ENCODE measurements at regions of chr10 and their contacts with region 1.

Region 1: GRCh38 chr10:100046021-100046486 is 35.6 kb downstream of the CPN1 start:
- DNase-seq: peak; percentile 78 to 95
- H3K4me3 ChIP-seq: no peak overlapping the region
- H3K4me1 ChIP-seq: no peaks in the 10 kb centered on the region
- H3K27me3 ChIP-seq: no peaks in the 10 kb centered on the region

Region 2: DNA sequence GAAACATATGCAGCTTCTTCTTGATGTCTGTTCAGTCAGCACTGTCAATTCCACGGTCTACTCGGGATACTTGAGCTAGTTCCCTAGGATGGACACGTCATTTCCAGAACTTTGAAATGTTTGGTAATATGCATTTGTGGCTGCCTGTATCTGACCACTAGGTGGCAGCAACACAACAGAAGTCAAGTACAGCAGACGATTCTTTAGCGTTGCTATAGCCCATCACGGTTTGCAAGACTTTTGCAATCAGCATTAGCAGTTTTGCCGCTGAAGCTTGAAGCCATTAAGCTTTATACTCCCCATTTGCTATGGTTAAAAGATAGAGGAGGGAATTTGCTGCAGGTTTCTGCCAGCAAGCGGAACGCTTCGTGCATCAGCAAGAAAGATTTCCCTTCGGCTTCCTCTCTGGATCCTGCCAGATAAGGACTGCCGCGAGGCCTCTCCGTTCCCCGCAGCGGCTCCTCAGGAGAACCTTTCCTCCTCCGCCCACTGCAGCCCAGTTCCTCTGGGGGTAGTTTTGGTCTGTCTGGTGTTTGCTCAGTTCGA is 200.1 kb before region 1 on chr10:
- in situ Hi-C with region 1: loop called (anchors 5 kb)
- DNase-seq: peak; percentile 85 to 86
- H3K4me3 ChIP-seq: no peak overlapping the region
- H3K4me1 ChIP-seq: peaks cover 22% of the 10 kb centered on the region
- H3K27me3 ChIP-seq: no peaks in the 10 kb centered on the region

Region 3: GRCh38 chr10:99938563-99938962 is 107.5 kb before region 1 on chr10:
- in situ Hi-C with region 1: no loop called
- DNase-seq: no peak
- H3K4me3 ChIP-seq: no peak overlapping the region
- H3K4me1 ChIP-seq: peaks cover 7% of the 10 kb centered on the region; the same call in 1 of the 2 replicates
- H3K27me3 ChIP-seq: no peaks in the 10 kb centered on the region

Region 4: GRCh38 chr10:100413173-100413572 is 367.1 kb after region 1 on chr10:
- in situ Hi-C with region 1: no loop called
- DNase-seq: no peak
- H3K4me3 ChIP-seq: no peak overlapping the region
- H3K4me1 ChIP-seq: no peaks in the 10 kb centered on the region
- H3K27me3 ChIP-seq: 0 out of 2 replicates have a peak, but pooled peaks cover 3% of the 10 kb centered on the region